Activated CD4-positive, alpha-beta T cell treated with anti-CD3 and anti-CD28 coated beads for 36 hours (primary cell): ENCODE measurements at regions of chr16 and their contacts with region 1.

Region 1: DNA sequence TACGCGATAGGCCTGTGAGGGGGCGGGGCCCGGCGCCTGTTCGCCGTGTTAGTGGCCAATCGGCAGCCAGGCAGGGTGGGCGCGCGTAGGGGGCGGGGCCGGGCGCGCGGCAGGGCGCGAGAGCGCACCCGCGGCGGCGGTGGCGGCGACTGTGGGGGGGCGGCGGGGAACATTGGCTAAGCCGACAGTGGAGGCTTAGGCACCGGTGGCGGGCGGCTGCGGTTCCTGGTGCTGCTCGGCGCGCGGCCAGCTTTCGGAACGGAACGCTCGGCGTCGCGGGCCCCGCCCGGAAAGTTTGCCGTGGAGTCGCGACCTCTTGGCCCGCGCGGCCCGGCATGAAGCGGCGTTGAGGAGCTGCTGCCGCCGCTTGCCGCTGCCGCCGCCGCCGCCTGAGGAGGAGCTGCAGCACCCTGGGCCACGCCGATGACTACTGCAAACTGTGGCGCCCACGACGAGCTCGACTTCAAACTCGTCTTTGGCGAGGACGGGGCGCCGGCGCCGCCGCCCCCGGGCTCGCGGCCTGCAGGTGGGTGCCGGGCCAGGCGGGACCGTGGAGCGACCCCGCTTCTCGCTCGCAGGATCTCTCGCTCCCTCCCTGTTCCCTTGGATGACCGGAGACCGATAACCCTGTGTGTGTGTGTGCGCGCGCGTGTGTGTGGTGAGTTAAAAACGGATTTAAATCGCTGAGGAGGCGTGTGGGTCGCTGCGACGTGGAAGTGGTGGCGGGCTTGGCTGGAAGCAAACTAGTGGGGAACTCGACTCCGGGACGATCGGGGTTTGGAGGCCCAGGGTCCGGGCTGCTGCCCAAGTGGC is at the start of gene NFATC3:
- DNase-seq: peak; percentile 100
- ATAC-seq: peak; percentile 62
- H3K4me3 Mint-ChIP-seq: peak within 1 kb of the TSS; percentile 89
- H3K27ac Mint-ChIP-seq: peak within 1 kb of the TSS; percentile 94
- H3K4me1 Mint-ChIP-seq: peaks cover 64% of the 10 kb centered on the region
- H3K27me3 Mint-ChIP-seq: no peaks in the 10 kb centered on the region
- total RNA-seq, gene NFATC3: 68.4 to 81.2 TPM

Region 2: DNA sequence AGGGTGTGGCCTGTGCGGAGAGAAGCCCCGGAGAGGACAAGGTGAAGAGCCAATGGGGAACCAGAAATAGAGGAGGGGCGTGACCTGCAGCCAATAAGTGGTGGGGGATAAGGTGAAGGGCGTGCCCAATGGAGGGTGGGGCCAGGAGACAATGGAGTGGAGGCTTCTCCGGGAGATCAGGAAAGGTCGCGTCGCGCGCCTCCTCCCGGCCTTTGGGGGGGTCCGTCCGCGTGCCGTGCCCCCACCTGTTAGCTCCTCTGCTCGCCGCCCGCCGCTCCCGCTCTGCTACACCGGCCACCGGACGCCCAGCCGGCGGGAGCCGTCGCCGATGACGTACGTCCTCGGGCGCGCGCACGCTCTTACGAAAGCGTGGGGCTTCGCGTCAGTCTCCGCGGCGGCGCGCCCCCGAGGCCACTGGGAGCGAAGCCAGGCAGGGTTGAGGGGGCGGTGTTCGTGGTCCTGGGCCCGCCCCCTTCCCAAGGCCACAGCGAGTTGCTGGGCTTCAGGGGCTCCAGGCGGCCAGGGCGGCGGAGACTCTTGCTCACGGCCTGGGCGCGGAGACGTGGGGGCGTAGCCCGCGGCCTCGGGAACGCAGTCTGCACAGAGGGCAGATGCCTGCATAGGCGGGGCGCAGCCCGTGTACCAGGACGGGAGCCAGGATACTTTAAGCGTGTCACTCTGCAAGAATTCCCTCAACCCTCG is 901.7 kb before region 1 on chr16 and contains the start of gene MATCAP1:
- CTCF ChIA-PET with region 1: no interaction called
- POLR2A ChIA-PET with region 1: no interaction called
- intact Hi-C with region 1: loop called in 1 of 2 experiments (anchors 10 kb)
- DNase-seq: peak; percentile 96
- ATAC-seq: peak; percentile 97
- H3K4me3 Mint-ChIP-seq: no peak within 1 kb of the TSS
- H3K27ac Mint-ChIP-seq: no peak within 1 kb of the TSS
- H3K4me1 Mint-ChIP-seq: peaks cover 15% of the 10 kb centered on the region
- H3K27me3 Mint-ChIP-seq: peaks cover 9% of the 10 kb centered on the region
- total RNA-seq, gene MATCAP1: 28.8 to 30.4 TPM

Region 3: GRCh38 chr16:67555795-67556212 is 529.7 kb before region 1 on chr16:
- CTCF ChIA-PET with region 1: no interaction called
- POLR2A ChIA-PET with region 1: no interaction called
- intact Hi-C with region 1: no loop called
- DNase-seq: no peak
- ATAC-seq: peak; percentile 96
- H3K4me3 Mint-ChIP-seq: peak overlapping the region; percentile 48
- H3K27ac Mint-ChIP-seq: peak overlapping the region; percentile 97
- H3K4me1 Mint-ChIP-seq: peaks cover 49% of the 10 kb centered on the region
- H3K27me3 Mint-ChIP-seq: no peaks in the 10 kb centered on the region

Region 4: DNA sequence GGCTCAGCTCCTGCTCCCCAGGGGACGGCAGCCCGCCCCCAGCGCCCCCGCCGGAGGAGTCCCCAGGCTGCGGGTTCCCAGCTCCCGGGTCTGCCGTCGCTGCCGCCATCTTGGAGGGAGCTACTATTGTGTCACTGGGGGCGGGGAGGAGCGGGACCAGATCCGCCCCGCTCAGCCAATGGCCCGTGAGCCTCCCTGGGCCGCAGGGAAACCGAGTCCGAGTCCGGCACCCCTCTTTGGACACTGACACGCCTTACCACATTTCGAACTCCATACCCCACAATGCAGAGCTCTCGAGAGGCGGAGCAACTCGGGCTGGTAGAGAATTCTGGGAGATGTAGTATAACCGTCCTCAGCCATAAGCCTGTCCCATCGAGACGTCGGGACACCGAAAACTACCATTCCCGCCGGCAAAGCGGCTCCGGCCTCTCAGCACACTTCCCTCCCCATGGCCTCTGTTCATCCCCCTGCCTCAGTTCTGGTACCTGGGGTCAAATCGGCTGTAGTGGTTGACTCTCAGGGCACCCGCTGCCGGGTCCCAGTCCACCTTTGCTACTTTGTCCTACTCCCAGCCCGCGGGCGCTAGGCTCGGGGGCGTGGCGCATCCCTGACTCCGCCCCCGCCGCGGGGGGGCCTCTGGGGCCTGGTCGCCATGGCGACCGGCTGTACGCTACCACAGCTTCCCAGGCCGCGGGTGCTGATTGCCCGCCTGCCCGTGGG is 278.9 kb before region 1 on chr16 and contains the starts of genes RANBP10 and TSNAXIP1:
- CTCF ChIA-PET with region 1: no interaction called
- POLR2A ChIA-PET with region 1: interaction called, 3 read pairs
- intact Hi-C with region 1: loop called (anchors 1 kb)
- DNase-seq: peak; percentile 98
- ATAC-seq: peak; percentile 96
- H3K4me3 Mint-ChIP-seq: peak within 1 kb of the TSS; percentile 91
- H3K27ac Mint-ChIP-seq: peak within 1 kb of the TSS; percentile 91
- H3K4me1 Mint-ChIP-seq: peaks cover 39% of the 10 kb centered on the region
- H3K27me3 Mint-ChIP-seq: no peaks in the 10 kb centered on the region
- total RNA-seq, gene RANBP10: 15.6 to 18.0 TPM
- total RNA-seq, gene TSNAXIP1: 0.62 to 1.1 TPM

Region 5: GRCh38 chr16:67957622-67958238 is 127.7 kb before region 1 on chr16:
- CTCF ChIA-PET with region 1: no interaction called
- POLR2A ChIA-PET with region 1: no interaction called
- intact Hi-C with region 1: no loop called
- DNase-seq: no peak
- ATAC-seq: no peak
- H3K4me3 Mint-ChIP-seq: no peak overlapping the region
- H3K27ac Mint-ChIP-seq: no peak overlapping the region
- H3K4me1 Mint-ChIP-seq: no peaks in the 10 kb centered on the region
- H3K27me3 Mint-ChIP-seq: no peaks in the 10 kb centered on the region

Region 6: GRCh38 chr16:67968400-67969253 is 116.8 kb before region 1 on chr16 and contains the start of gene SLC12A4:
- CTCF ChIA-PET with region 1: no interaction called
- POLR2A ChIA-PET with region 1: no interaction called
- intact Hi-C with region 1: loop called in 1 of 2 experiments (anchors 1 kb)
- DNase-seq: peak; percentile 94
- ATAC-seq: peak; percentile 90
- H3K4me3 Mint-ChIP-seq: peak within 1 kb of the TSS; percentile 84
- H3K27ac Mint-ChIP-seq: peak within 1 kb of the TSS; percentile 80
- H3K4me1 Mint-ChIP-seq: peaks cover 14% of the 10 kb centered on the region
- H3K27me3 Mint-ChIP-seq: no peaks in the 10 kb centered on the region
- total RNA-seq, gene SLC12A4: 21.8 to 25.8 TPM

Region 7: GRCh38 chr16:68229431-68230198 is 144.2 kb after region 1 on chr16:
- CTCF ChIA-PET with region 1: interaction called, 15 read pairs
- POLR2A ChIA-PET with region 1: interaction called, 6 read pairs
- intact Hi-C with region 1: no loop called
- DNase-seq: peak; percentile 60
- ATAC-seq: no peak
- H3K4me3 Mint-ChIP-seq: no peak overlapping the region
- H3K27ac Mint-ChIP-seq: peak overlapping the region; percentile 48
- H3K4me1 Mint-ChIP-seq: peaks cover 48% of the 10 kb centered on the region
- H3K27me3 Mint-ChIP-seq: no peaks in the 10 kb centered on the region

Region 8: DNA sequence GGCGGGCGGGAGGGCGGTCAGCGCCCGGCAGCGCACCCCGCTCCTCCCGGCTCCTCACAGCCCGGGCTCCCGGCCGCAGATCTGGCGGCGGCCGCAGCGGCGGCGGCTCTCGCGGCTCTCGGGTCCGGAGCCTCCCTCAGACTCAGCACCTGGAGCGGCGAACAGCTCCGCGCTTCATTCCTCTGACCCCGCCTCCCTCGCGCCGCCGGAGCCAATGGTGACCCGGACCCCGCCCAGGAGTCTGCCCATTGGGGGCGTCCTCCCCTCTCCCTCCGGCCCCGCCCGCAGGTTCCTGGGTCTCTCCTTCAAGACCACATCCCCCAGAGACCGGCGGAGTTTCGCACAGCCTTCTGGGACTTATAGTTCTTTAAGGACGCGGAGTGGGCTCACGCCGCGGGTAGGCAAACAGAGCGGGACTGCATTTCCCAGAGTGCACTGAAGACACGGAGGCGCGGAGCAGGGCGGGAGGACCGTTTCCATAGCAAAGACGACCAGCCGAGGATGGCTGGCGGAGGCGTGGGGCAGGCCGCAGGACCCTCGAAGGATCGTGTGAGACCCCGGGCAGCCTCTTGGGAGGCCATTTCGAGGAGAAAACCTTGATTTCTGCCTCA is 363.0 kb after region 1 on chr16 and contains the start of gene SMPD3:
- CTCF ChIA-PET with region 1: no interaction called
- POLR2A ChIA-PET with region 1: no interaction called
- intact Hi-C with region 1: loop called in 1 of 2 experiments (anchors 1 kb)
- DNase-seq: peak; percentile 99
- ATAC-seq: peak; percentile 98
- H3K4me3 Mint-ChIP-seq: peak within 1 kb of the TSS; percentile 71
- H3K27ac Mint-ChIP-seq: no peak within 1 kb of the TSS
- H3K4me1 Mint-ChIP-seq: peaks cover 14% of the 10 kb centered on the region
- H3K27me3 Mint-ChIP-seq: peaks cover 19% of the 10 kb centered on the region
- total RNA-seq, gene SMPD3: 0.07 to 0.37 TPM